ENCODE measurements at regions of chr16 and their contacts with region 1.

Region 1: DNA sequence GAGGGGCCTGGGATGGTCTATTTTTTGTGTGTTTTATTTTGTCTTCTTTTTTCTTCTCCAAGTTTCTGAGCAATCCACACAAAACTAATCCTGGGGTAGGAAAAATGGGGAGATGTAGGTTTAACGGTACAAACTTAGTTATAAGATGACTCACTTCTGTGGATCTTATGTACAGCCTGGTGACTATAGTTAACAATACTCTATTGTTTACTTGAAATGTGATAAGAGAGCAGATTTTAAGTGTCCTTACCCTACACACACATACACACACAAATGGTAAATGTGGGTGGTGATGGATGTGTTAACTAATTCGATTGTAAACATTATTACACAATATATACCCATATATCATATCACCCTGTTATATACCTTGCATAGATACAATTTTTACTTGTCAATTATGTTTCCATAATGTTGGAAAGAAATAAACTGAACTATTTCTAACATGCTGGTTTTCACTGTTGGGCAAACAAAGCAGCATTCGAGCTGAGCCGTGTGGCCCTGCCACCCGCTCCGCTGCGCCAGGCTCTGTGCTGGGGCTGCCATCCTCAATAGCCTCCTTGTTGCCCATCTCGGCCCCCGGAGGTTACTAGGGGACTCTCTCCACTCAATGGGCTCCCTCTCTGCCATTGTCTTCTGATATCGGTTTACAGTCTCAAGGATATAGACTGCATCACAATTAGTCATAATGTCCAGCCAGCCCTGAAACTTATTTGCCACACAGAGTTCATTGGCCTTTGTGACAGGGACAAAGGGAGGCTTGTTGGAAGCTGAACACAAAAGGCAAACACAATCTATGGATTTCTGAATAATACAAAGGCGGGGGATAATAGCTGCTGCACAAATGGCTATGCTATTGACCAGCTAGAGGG is 380.3 kb upstream of the MAF start:
- DNase-seq: no peak
- H3K4me3 ChIP-seq: no peak overlapping the region
- H3K27ac ChIP-seq: no peak overlapping the region
- H3K4me1 ChIP-seq: no peaks in the 10 kb centered on the region
- H3K27me3 ChIP-seq: no peaks in the 10 kb centered on the region
- CTCF ChIP-seq: no peak
- POLR2A ChIP-seq: no peak

Region 2: DNA sequence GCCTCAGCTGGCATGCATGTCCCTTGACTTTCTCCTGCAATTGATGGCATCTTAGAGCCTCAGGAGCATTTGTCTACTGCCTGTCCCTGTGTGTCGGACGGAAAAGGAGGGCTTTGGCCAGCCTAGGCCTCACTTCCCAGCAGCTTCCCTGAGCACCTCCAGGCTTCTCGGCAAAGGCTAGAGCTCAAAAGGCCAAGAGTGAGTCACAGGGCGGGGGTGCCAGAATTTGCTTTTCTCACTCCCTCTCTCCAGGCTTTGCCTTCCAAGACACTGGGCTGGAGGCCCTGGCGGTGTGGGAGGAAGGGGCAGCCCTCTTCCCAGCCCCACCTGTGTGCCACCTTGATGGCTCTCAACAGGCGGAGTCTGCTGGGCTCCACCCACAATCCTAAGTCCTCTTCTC is 273.0 kb before region 1 on chr16:
- intact Hi-C with region 1: loop called (anchors 5 kb)
- DNase-seq: no peak
- H3K4me3 ChIP-seq: no peak overlapping the region
- H3K27ac ChIP-seq: peak overlapping the region in 1 of 2 donors; percentile 57
- H3K4me1 ChIP-seq: no peaks in the 10 kb centered on the region
- H3K27me3 ChIP-seq: no peaks in the 10 kb centered on the region
- CTCF ChIP-seq: no peak
- POLR2A ChIP-seq: no peak

Region 3: DNA sequence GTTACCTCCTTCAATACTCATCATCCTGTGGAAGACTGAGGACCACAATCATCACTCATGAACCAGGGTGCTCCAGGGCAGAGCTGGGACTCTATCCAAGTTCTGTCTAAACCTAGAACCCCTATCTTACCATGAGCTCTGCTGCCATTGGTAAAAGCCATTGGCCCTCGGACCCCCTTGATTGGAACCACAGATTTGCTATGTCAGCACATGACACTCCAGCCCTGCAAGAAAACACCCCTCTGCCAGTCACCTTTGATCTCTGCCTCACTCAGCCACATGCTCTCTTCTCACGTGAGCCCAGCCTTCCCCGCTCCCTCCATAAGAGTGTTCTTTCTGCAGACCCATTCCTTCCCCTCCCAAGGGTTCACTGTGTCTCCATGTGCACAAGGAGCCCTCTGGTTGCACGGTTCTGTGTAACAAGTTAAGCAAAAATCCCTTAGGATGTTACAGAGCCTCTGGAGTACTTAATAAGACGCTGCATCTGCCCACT is 91.1 kb after region 1 on chr16:
- intact Hi-C with region 1: no loop called
- DNase-seq: no peak
- H3K4me3 ChIP-seq: no peak overlapping the region
- H3K27ac ChIP-seq: no peak overlapping the region
- H3K4me1 ChIP-seq: no peaks in the 10 kb centered on the region
- H3K27me3 ChIP-seq: no peaks in the 10 kb centered on the region
- CTCF ChIP-seq: no peak
- POLR2A ChIP-seq: no peak

Measured in breast epithelium (tissue), 4 donors.